A673 (cell line): ENCODE measurements at regions of chr2 and their contacts with region 1.

Region 1: DNA sequence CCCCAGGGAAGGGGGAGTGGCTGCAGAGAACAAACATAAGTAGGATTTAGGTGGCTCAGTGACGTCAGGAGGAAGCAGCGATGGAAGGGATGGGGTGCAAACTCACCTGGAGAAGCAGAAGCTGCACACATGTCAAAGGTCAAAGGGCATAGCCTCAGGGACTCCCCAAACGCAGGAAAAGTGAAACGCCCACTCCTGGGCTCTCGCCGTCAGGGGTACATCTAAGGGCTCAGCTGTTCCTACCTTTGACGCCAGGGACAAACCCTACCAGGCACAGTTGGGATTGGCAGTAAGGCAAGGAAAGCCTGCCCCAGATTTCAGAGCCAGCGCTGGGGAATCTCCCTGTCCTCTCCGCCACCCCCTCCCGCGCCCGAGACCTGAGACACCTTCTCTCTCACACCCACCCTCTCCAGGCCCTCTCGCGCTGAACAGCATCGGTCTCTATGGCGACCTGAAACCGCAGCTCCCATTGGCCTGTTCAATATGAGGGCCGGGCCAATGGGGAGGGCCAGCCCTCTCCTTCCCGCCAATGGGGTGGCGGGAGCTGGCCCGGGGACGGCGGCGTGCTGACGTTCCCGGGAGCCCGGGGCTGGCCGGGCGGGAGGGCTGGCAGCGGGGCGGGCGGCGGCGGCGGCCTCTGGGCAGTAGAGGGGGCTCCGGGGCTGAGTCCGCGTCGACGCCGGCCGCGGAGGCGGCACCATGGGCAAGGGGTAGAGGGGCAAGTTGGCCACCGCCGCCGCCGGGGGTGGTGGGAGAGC is at the starts of genes CCDC148 and PKP4:
- DNase-seq: peak; percentile 97
- H3K4me3 ChIP-seq: peak within 1 kb of the TSS; percentile 96
- H3K27ac ChIP-seq: peak within 1 kb of the TSS; percentile 78
- H3K4me1 ChIP-seq: peaks cover 30% of the 10 kb centered on the region
- H3K27me3 ChIP-seq: no peaks in the 10 kb centered on the region
- CTCF ChIP-seq: no peak
- total RNA-seq, gene CCDC148: 0.90 and 0.92 TPM in 2 replicates
- total RNA-seq, gene PKP4: 67.7 and 79.3 TPM in 2 replicates

Region 2: DNA sequence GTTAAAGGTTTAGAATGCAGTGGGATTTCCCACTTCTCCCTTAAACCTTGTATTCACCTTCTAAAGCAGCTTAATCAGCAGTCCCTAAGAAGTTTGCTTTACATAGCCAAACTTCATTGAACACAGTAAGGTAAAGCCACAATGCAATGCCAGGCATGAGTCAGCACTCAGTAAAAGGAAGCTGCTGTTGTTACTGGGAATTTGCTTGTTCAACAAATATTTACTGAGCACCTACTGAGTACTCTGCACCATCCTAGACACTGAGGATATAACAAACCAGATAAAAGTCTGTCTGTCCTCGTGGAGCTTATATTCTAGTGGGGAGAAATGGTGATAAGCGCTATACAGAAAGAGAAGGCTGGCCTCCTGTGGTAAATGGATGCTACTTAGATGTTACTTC is 163.0 kb after region 1 on chr2:
- CTCF ChIA-PET with region 1: no interaction called
- POLR2A ChIA-PET with region 1: no interaction called
- intact Hi-C with region 1: loop called (anchors 5 kb)
- DNase-seq: peak; percentile 18
- H3K4me3 ChIP-seq: no peak overlapping the region
- H3K27ac ChIP-seq: peak overlapping the region; percentile 31
- H3K4me1 ChIP-seq: peaks cover 10% of the 10 kb centered on the region
- H3K27me3 ChIP-seq: no peaks in the 10 kb centered on the region
- CTCF ChIP-seq: no peak